Pancreas (tissue), 10 donors: ENCODE measurements at regions of chr17 and their contacts with region 1.

Region 1: GRCh38 chr17:40038882-40039513 is 15.2 kb downstream of the MED24 start:
- DNase-seq: peak in 2 of 6 donors; percentile 55
- ATAC-seq: peak; percentile 85 to 92 (median 87)
- H3K4me3 ChIP-seq: no peak overlapping the region
- H3K27ac ChIP-seq: peak overlapping the region in 1 of 4 donors; percentile 30
- H3K4me1 ChIP-seq: no peaks in the 10 kb centered on the region
- H3K27me3 ChIP-seq: no peaks in the 10 kb centered on the region
- CTCF ChIP-seq: peak in 3 of 4 donors; percentile 14 to 45 (median 41)

Region 2: GRCh38 chr17:40086150-40087044 is 47.4 kb after region 1 on chr17:
- intact Hi-C with region 1: loop called in 1 of 3 experiments (anchors 10 kb)
- DNase-seq: peak in 3 of 6 donors; percentile 71 to 88 (median 81)
- ATAC-seq: peak; percentile 55 to 88 (median 77)
- H3K4me3 ChIP-seq: no peak overlapping the region
- H3K27ac ChIP-seq: no peak overlapping the region
- H3K4me1 ChIP-seq: no peaks in the 10 kb centered on the region
- H3K27me3 ChIP-seq: no peaks in the 10 kb centered on the region
- CTCF ChIP-seq: peak; percentile 65 to 86 (median 72)

Region 3: GRCh38 chr17:40157973-40158372 is 119.0 kb after region 1 on chr17:
- intact Hi-C with region 1: no loop called
- DNase-seq: no peak
- ATAC-seq: no peak
- H3K4me3 ChIP-seq: no peak overlapping the region
- H3K27ac ChIP-seq: no peak overlapping the region
- H3K4me1 ChIP-seq: no peaks in the 10 kb centered on the region
- H3K27me3 ChIP-seq: no peaks in the 10 kb centered on the region
- CTCF ChIP-seq: no peak

Region 4: DNA sequence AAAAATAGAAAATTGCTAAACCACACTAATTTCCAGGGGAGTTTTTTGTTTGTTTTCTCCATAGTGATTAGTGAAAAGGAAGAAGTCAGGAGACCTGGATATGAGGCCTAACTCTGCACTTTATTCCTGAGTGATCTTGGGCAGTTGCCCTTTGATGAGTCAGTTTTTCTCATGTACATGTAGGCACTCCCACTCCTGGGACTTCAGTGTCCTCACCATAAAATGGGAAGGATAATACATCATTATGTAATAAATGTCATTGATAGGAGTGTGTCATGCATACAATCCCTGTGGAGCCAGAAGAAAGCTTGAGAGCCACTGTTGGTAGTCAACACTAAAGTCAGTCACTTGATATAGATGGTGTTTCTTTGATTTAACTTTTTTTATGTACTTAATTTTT is 212.6 kb after region 1 on chr17:
- intact Hi-C with region 1: no loop called
- DNase-seq: no peak
- ATAC-seq: peak; percentile 69 to 89 (median 76)
- H3K4me3 ChIP-seq: no peak overlapping the region
- H3K27ac ChIP-seq: no peak overlapping the region
- H3K4me1 ChIP-seq: peaks cover 0 to 8% (median 0%) of the 10 kb centered on the region in 3 donors
- H3K27me3 ChIP-seq: no peaks in the 10 kb centered on the region
- CTCF ChIP-seq: no peak